ENCODE measurements at regions of chr3 and their contacts with region 1.

Region 1: DNA sequence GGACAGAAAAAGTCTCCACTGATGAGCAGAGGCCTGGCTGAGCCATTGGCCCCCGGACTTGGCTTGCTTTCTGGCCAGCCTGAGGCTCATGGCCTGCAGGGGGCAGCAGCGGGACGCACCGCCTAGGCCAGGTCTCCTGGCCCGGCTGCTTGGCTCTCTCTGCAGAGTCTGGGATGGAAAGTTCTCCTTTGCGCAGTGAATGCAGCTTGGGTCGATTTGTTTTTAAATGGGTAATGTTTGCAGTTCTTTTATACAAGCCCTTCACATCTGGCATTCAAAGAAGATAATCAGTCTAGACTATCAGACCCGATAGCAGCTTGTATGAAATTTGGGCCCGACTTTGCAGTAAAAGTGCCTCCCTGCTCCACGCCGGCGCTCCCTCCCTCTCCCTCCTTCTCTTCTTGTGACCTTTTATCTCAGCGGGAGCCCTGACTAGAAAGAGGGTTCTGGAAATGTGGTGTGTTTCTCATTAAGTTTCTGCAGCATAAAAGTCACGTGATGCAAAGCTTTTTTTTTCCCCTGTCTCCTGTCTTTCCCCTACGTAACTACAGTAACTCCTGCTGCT is 59.9 kb downstream of the ZNF621 start:
- DNase-seq: peak; percentile 94
- H3K4me3 ChIP-seq: no peak overlapping the region
- H3K27ac ChIP-seq: peak overlapping the region in 1 of 8 donors; percentile 17
- H3K4me1 ChIP-seq: peaks cover 0 to 22% (median 12%) of the 10 kb centered on the region in 6 donors
- H3K27me3 ChIP-seq: peaks cover 0 to 10% (median 3%) of the 10 kb centered on the region in 7 donors
- CTCF ChIP-seq: peak; percentile 68 to 95 (median 92)
- POLR2A ChIP-seq: no peak

Region 2: DNA sequence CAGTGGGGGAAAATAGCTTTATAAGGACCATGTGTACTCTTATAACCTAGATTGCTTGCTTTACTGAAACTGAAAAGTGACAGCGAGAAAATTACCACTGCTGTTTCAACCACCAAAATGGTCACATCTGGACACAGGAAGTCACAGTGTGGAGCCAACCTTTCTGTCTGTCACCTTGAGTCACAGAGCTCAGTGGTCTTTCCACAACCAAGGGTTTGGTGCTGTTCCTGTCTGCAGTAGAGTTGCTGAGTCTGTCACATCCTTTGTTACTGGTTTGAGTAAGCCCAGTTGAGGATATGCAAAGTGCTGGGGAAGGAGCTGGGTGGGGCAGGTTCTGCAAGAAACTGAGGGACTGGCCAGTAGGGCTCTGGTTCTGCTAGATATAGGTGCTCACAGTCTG is 414.3 kb before region 1 on chr3:
- intact Hi-C with region 1: no loop called
- DNase-seq: no peak
- H3K4me3 ChIP-seq: no peak overlapping the region
- H3K27ac ChIP-seq: no peak overlapping the region
- H3K4me1 ChIP-seq: peaks cover 0 to 9% (median 0%) of the 10 kb centered on the region in 6 donors
- H3K27me3 ChIP-seq: no peaks in the 10 kb centered on the region
- CTCF ChIP-seq: no peak
- POLR2A ChIP-seq: no peak

Region 3: DNA sequence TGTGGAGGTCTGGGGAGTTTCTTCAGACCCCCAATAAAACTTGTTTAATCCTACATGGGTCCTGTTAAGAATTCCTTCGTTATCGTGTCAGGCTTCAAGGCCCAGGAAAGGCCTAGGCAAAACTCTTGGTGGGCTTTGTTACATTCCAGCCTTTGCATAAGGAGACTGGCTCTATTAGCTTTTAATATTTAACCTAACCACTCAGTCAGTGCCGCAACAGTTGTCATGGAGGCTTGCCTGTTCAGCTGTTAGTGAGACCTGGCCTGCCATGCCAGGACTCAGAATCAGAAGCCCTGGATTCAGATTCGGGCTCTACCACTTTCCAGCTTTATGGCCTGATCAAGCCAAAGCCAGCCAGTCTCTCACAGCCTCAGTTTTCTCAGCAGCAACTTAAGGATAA is 255.6 kb before region 1 on chr3:
- intact Hi-C with region 1: loop called (anchors 5 kb)
- DNase-seq: no peak
- H3K4me3 ChIP-seq: no peak overlapping the region
- H3K27ac ChIP-seq: no peak overlapping the region
- H3K4me1 ChIP-seq: peaks cover 0 to 4% (median 0%) of the 10 kb centered on the region in 6 donors
- H3K27me3 ChIP-seq: no peaks in the 10 kb centered on the region
- CTCF ChIP-seq: no peak
- POLR2A ChIP-seq: no peak

Region 4: DNA sequence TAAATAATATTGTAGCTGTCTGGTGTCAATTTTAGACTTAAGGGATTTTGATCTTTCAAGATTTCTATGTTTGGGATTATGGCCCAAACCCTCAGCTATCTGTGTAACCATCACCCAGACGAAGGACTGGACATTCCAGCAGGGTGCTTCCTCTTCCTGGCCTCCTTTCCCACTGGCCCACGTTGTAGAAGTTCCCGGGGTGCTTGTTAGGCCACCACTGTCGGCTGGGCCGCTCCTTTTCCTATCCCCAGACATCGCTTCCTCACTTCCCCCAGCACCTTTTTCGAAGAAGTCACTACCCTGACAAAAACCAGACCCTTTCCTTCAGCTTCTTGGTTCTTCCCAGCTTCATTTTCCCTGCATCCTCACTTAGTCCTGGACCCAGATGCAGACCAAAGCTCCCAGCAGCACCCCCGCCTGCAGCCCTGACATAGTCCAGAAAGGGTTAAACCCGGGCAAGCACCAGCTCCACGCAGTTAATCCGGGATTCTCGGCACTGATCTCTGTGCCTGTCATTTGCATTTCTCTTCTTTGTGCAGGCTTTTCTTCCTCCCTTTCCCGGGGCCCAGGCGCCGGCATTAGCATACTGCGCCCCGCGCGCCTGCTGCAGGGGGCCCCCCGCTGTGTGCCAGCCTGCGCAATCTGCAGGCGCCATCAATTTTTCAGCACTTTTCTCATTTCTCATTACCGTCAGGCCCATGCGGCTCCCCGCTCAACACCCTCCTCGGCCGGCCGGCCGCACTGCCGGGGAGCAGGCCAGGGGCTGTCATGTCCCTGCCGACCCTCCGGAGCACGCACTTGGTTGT is 30.6 kb after region 1 on chr3:
- intact Hi-C with region 1: no loop called
- DNase-seq: no peak
- H3K4me3 ChIP-seq: peak overlapping the region in 2 of 8 donors; percentile 10 to 24
- H3K27ac ChIP-seq: no peak overlapping the region
- H3K4me1 ChIP-seq: peaks cover 0 to 10% (median 3%) of the 10 kb centered on the region in 6 donors
- H3K27me3 ChIP-seq: peaks cover 0 to 38% (median 11%) of the 10 kb centered on the region in 7 donors
- CTCF ChIP-seq: no peak
- POLR2A ChIP-seq: no peak

Region 5: DNA sequence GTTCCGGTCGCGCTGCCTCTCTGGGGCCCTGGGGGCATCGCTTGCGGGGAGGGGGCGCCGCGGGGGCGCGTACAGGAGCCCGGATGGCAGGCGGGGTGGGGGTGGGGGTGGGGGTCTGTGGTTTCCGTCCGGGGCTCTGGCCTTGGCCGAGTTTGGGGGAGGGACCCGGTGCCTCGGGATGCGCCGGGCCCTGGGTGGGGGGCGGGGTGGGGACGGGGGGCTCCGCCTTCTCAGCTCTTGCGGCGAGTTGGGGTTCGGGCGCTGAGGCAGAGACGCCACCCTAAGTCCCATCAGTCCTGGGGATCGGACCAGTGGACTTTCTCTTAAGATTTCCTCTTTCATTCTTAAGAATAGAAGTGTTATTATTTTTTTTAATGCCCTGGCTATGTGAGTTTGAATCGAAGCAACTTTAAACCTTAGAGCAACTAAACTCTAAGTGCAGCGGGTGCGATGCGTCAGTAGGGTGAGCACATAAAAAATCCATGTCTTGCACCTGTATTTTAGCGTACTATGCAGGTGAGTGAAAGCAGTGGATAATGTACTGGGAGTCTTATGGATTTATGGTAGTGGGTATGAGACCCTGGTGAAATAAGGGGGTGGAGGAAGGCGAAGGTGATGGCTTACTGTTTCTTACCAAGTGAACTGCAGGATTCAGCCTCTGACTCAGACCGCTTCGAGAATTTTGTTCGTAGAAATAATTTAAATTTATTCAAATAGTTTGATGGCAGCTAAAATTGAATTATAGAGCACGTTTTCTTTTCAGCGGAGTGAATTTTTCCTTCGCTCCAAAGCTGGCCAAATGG is 615.4 kb after region 1 on chr3:
- intact Hi-C with region 1: loop called (anchors 10 kb)
- DNase-seq: no peak
- H3K4me3 ChIP-seq: peak overlapping the region; percentile 64 to 90 (median 81)
- H3K27ac ChIP-seq: peak overlapping the region; percentile 93 to 99 (median 97)
- H3K4me1 ChIP-seq: peaks cover 35 to 61% (median 53%) of the 10 kb centered on the region in 6 donors
- H3K27me3 ChIP-seq: no peaks in the 10 kb centered on the region
- CTCF ChIP-seq: no peak
- POLR2A ChIP-seq: no peak

Region 6: GRCh38 chr3:41581700-41582099 is 997.0 kb after region 1 on chr3:
- intact Hi-C with region 1: loop called (anchors 5 kb)
- DNase-seq: no peak
- H3K4me3 ChIP-seq: no peak overlapping the region
- H3K27ac ChIP-seq: no peak overlapping the region
- H3K4me1 ChIP-seq: peaks cover 0 to 11% (median 0%) of the 10 kb centered on the region in 6 donors
- H3K27me3 ChIP-seq: no peaks in the 10 kb centered on the region
- CTCF ChIP-seq: no peak
- POLR2A ChIP-seq: no peak

Region 7: GRCh38 chr3:41716471-41716870 is 1131.8 kb after region 1 on chr3:
- intact Hi-C with region 1: loop called (anchors 10 kb)
- DNase-seq: no peak
- H3K4me3 ChIP-seq: no peak overlapping the region
- H3K27ac ChIP-seq: no peak overlapping the region
- H3K4me1 ChIP-seq: no peaks in the 10 kb centered on the region
- H3K27me3 ChIP-seq: no peaks in the 10 kb centered on the region
- CTCF ChIP-seq: peak in 2 of 11 experiments; percentile 8 to 18
- POLR2A ChIP-seq: no peak

Region 8: GRCh38 chr3:41881233-41881821 is 1296.6 kb after region 1 on chr3:
- intact Hi-C with region 1: loop called (anchors 2 kb)
- DNase-seq: no peak
- H3K4me3 ChIP-seq: no peak overlapping the region
- H3K27ac ChIP-seq: no peak overlapping the region
- H3K4me1 ChIP-seq: no peaks in the 10 kb centered on the region
- H3K27me3 ChIP-seq: no peaks in the 10 kb centered on the region
- CTCF ChIP-seq: peak; percentile 49 to 83 (median 72)
- POLR2A ChIP-seq: no peak